ENCODE measurements at regions of chr2 and their contacts with region 1.

Region 1: DNA sequence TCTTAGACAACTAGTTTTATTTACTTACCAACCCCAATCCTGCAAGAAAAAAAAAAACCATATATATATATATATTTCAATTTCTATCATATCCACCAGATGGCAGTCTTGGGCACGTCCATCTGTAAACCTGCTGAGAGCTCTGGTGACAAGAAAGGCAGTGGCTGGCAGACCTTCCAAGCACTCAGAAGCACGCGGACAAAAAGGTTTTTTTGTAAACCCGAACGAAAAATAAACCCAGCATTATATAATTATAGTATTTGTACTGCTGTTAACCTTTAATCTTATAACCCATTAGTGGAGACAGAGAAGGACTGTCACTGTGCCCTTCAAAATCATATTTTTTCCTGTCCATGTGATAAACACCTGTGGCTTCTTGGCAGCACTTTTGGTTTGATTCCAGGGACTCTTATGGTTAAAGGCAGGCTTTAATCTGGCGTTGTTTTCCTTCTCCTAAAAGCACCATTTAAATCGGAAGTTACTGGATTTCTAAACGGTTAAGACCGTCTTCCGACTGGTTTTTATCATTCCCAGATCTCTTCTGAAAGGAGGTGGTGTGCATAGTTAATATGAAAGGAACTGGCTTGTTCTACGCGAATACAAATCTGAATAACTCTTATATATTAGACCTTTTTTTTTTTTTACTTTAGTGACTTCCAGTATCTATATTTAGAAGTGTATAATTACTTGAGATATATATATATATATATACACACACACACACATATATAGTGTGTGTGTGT is 31.0 kb upstream of the SLC3A1 start:
- DNase-seq: peak; percentile 60
- H3K4me3 Mint-ChIP-seq: peak overlapping the region; percentile 59
- H3K27ac Mint-ChIP-seq: peak overlapping the region; percentile 87
- H3K4me1 Mint-ChIP-seq: peaks cover 46% of the 10 kb centered on the region
- H3K27me3 Mint-ChIP-seq: no peaks in the 10 kb centered on the region
- CTCF ChIP-seq: peak; percentile 47

Region 2: DNA sequence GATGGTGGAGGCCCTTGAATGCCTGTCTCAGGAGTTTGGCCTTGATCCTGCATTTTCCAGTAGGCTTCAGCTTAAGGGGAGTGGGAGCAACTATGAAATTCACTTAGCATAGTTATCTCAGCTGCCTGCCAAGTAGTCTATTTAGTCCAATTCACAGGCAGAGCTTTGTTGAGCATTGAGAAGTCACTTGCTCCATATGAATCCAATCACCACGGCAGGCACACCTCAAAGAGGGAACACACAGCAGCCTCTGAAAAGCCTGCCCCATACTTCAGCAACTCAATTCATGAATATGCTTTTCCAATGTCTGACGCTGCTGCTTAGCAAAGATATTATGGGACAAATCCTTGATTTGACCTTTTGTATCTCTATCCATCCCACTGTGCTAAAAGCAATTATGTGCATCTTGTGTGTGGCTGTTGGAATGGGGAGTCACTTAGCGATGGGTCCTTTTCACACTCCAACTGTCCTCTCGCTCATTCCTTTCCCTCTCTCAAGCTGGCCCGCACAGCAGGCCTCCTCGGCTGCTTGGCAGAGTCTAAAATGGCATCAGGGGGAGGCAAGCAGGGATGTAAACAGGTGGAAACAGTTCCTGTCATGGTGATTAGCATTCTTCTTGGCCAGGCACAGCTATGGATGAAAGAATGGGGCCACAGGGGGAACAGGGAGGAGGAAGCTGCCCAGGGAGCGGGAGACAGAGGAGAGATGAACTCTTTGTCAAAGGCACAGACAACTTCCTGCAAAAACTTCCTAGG is 192.5 kb before region 1 on chr2:
- CTCF ChIA-PET with region 1: no interaction called
- intact Hi-C with region 1: no loop called
- DNase-seq: no peak
- H3K4me3 Mint-ChIP-seq: no peak overlapping the region
- H3K27ac Mint-ChIP-seq: no peak overlapping the region
- H3K4me1 Mint-ChIP-seq: no peaks in the 10 kb centered on the region
- H3K27me3 Mint-ChIP-seq: no peaks in the 10 kb centered on the region
- CTCF ChIP-seq: no peak

Region 3: GRCh38 chr2:44087036-44087713 is 157.1 kb before region 1 on chr2:
- CTCF ChIA-PET with region 1: interaction called, 3 read pairs
- intact Hi-C with region 1: loop called (anchors 1 kb)
- DNase-seq: peak; percentile 90
- H3K4me3 Mint-ChIP-seq: peak overlapping the region; percentile 68
- H3K27ac Mint-ChIP-seq: peak overlapping the region; percentile 75
- H3K4me1 Mint-ChIP-seq: peaks cover 65% of the 10 kb centered on the region
- H3K27me3 Mint-ChIP-seq: no peaks in the 10 kb centered on the region
- CTCF ChIP-seq: peak; percentile 89

Region 4: GRCh38 chr2:44184106-44184505 is 60.2 kb before region 1 on chr2:
- CTCF ChIA-PET with region 1: no interaction called
- intact Hi-C with region 1: no loop called
- DNase-seq: no peak
- H3K4me3 Mint-ChIP-seq: no peak overlapping the region
- H3K27ac Mint-ChIP-seq: no peak overlapping the region
- H3K4me1 Mint-ChIP-seq: peaks cover 41% of the 10 kb centered on the region
- H3K27me3 Mint-ChIP-seq: no peaks in the 10 kb centered on the region
- CTCF ChIP-seq: no peak

Region 5: GRCh38 chr2:44291281-44292248 is 47.3 kb after region 1 on chr2:
- CTCF ChIA-PET with region 1: interaction called, 80 read pairs
- intact Hi-C with region 1: loop called (anchors 1 kb)
- DNase-seq: peak; percentile 93
- H3K4me3 Mint-ChIP-seq: peak overlapping the region; percentile 43
- H3K27ac Mint-ChIP-seq: peak overlapping the region; percentile 96
- H3K4me1 Mint-ChIP-seq: peaks cover 53% of the 10 kb centered on the region
- H3K27me3 Mint-ChIP-seq: no peaks in the 10 kb centered on the region
- CTCF ChIP-seq: peak; percentile 82

Region 6: GRCh38 chr2:44479122-44479887 is 235.0 kb after region 1 on chr2:
- CTCF ChIA-PET with region 1: interaction called, 4 read pairs
- intact Hi-C with region 1: loop called (anchors 10 kb)
- DNase-seq: peak; percentile 55
- H3K4me3 Mint-ChIP-seq: no peak overlapping the region
- H3K27ac Mint-ChIP-seq: no peak overlapping the region
- H3K4me1 Mint-ChIP-seq: no peaks in the 10 kb centered on the region
- H3K27me3 Mint-ChIP-seq: no peaks in the 10 kb centered on the region
- CTCF ChIP-seq: peak; percentile 92

Measured in Calu3 (cell line).